ENCODE measurements at regions of chr2 and their contacts with region 1.

Region 1: GRCh38 chr2:84970868-84971509 is at the start of gene KCMF1:
- DNase-seq: peak; percentile 69
- H3K4me3 Mint-ChIP-seq: peak within 1 kb of the TSS; percentile 97
- H3K27ac Mint-ChIP-seq: peak within 1 kb of the TSS; percentile 97
- H3K4me1 Mint-ChIP-seq: peaks cover 12% of the 10 kb centered on the region
- H3K27me3 Mint-ChIP-seq: no peaks in the 10 kb centered on the region
- CTCF ChIP-seq: no peak
- total RNA-seq, gene KCMF1: 169 and 170 TPM in 2 replicates

Region 2: GRCh38 chr2:84865181-84865783 is 105.7 kb before region 1 on chr2:
- CTCF ChIA-PET with region 1: no interaction called
- POLR2A ChIA-PET with region 1: no interaction called
- intact Hi-C with region 1: no loop called
- DNase-seq: peak; percentile 47
- H3K4me3 Mint-ChIP-seq: no peak overlapping the region
- H3K27ac Mint-ChIP-seq: no peak overlapping the region
- H3K4me1 Mint-ChIP-seq: peaks cover 5% of the 10 kb centered on the region
- H3K27me3 Mint-ChIP-seq: no peaks in the 10 kb centered on the region
- CTCF ChIP-seq: peak; percentile 49

Region 3: GRCh38 chr2:84946204-84947009 is 24.6 kb before region 1 on chr2:
- CTCF ChIA-PET with region 1: interaction called, 3 read pairs
- POLR2A ChIA-PET with region 1: interaction called, 41 read pairs
- intact Hi-C with region 1: no loop called
- DNase-seq: peak; percentile 85
- H3K4me3 Mint-ChIP-seq: peak overlapping the region; percentile 8
- H3K27ac Mint-ChIP-seq: peak overlapping the region; percentile 89
- H3K4me1 Mint-ChIP-seq: peaks cover 13% of the 10 kb centered on the region
- H3K27me3 Mint-ChIP-seq: no peaks in the 10 kb centered on the region
- CTCF ChIP-seq: no peak

Region 4: GRCh38 chr2:85011747-85012146 is 40.8 kb after region 1 on chr2:
- CTCF ChIA-PET with region 1: interaction called, 8 read pairs
- POLR2A ChIA-PET with region 1: interaction called, 14 read pairs
- intact Hi-C with region 1: loop called (anchors 5 kb)
- DNase-seq: no peak
- H3K4me3 Mint-ChIP-seq: no peak overlapping the region
- H3K27ac Mint-ChIP-seq: peak overlapping the region; percentile 35
- H3K4me1 Mint-ChIP-seq: peaks cover 41% of the 10 kb centered on the region
- H3K27me3 Mint-ChIP-seq: no peaks in the 10 kb centered on the region
- CTCF ChIP-seq: no peak

Measured in MCF 10A (cell line).